Left ventricle myocardium inferior (tissue), 1 donor: ENCODE measurements at regions of chr6 and their contacts with region 1.

Region 1: DNA sequence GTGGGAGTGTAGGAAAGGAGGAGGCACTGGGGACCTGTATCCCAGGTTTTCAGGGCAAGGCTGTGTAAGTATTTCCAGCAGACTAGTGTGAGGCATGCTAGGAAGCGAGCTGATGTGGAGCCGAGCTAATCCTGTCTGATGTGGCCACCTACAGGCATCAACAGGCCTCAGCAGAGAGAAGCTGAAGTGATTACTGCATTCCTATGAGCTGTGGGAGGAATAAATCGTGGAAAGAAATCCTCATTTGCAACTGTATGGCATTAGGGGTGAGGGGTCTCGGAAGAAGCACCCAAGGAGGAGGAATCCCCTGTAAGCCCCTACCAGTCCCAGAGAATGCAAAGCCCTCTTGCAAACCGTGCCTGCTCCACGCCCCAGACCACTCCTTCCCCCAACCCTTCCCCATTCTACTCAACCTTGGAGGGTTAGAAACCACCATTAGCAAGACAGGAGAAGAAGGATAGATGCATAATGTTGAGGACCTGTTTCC is 41.6 kb downstream of the C6orf15 start:
- DNase-seq: no peak
- H3K4me3 ChIP-seq: no peak overlapping the region
- H3K27ac ChIP-seq: no peak overlapping the region
- H3K4me1 ChIP-seq: peaks cover 4% of the 10 kb centered on the region
- H3K27me3 ChIP-seq: no peaks in the 10 kb centered on the region
- CTCF ChIP-seq: peak; percentile 62

Region 2: GRCh38 chr6:30915591-30915946 is 155.2 kb before region 1 on chr6:
- intact Hi-C with region 1: loop called (anchors 5 kb)
- DNase-seq: no peak
- H3K4me3 ChIP-seq: peak overlapping the region; percentile 74
- H3K27ac ChIP-seq: peak overlapping the region; percentile 95
- H3K4me1 ChIP-seq: peaks cover 27% of the 10 kb centered on the region
- H3K27me3 ChIP-seq: no peaks in the 10 kb centered on the region
- CTCF ChIP-seq: peak; percentile 72